Right cardiac atrium (tissue), 5 donors: ENCODE measurements at regions of chr19 and their contacts with region 1.

Region 1: DNA sequence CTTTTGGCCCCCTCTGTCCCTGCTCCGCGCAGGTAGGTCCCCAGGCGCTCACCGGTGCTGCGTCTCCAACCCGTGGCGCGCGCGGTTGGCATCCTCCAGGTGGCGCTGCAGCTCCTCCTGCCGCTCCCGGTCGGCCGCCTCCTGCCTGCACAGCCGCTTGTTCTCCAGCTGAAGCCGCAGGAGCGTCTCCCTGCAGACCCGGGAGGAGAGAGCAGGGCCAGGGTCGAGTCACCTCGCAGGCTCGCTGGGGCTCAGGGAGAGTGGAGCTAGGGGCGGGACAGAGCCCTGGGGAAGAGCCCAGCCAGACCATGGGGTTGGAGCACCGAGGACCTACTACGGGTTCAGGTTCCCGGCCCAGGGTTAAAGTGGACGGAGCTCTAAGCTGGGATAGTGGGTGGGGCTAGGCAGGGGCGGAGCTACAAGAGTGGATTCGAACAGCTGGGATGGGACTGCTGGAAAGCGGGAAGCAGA is 9.3 kb downstream of the HOOK2 start:
- DNase-seq: peak; percentile 79 to 96 (median 95)
- ATAC-seq: peak; percentile 86 to 91
- H3K4me3 ChIP-seq: no peak overlapping the region
- H3K27ac ChIP-seq: no peak overlapping the region
- H3K4me1 ChIP-seq: no peaks in the 10 kb centered on the region
- H3K27me3 ChIP-seq: no peaks in the 10 kb centered on the region

Region 2: GRCh38 chr19:12610540-12611360 is 155.3 kb before region 1 on chr19 and contains the starts of genes ZNF490 and ZNF791:
- intact Hi-C with region 1: no loop called
- DNase-seq: peak; percentile 98 to 99 (median 99)
- ATAC-seq: peak; percentile 99 to 100
- H3K4me3 ChIP-seq: peak within 1 kb of the TSS; percentile 65
- H3K27ac ChIP-seq: peak within 1 kb of the TSS; percentile 95
- H3K4me1 ChIP-seq: no peaks in the 10 kb centered on the region
- H3K27me3 ChIP-seq: no peaks in the 10 kb centered on the region
- total RNA-seq, gene ZNF490: 4.9 to 7.1 (median 6.0) TPM
- total RNA-seq, gene ZNF791: 19.8 to 26.7 (median 20.9) TPM

Region 3: DNA sequence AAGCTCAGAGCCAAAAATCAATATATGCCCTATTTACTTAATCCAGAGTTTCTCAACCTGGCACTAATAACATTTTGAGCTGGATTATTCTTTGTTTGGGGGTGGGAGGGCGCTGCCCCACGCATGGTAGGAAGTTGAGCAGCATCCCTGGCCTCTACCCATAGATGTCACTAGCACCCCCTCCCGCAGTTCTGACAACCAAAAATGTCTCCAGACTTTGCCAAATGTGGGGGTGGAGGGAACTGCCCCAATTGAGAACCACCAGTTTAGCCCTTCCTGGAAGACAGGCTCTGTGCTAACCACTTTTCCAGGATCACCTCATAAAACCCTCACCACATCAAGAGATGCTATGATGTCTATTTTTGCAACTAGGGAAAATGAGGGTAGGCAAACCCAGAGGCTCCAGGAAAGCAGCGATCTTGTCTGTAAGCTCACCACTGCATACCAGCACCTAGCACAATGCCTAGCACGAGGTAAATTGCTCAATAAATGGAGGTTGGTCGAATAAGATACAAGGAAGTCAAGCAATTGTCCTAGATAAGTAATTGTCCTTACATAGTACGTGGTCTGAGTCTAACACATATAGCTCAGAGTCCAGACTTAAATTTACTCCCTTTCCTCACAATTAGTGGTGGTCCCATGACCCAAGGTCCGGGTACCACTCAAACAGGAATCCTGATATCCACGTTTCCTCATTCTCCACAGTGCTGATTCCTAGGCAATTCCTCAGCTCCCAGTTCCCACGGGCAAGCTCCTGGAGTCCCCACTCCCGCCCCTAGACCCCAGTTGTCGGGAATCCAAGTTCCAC is 32.5 kb before region 1 on chr19:
- intact Hi-C with region 1: no loop called
- DNase-seq: no peak
- ATAC-seq: no peak
- H3K4me3 ChIP-seq: peak overlapping the region; percentile 96
- H3K27ac ChIP-seq: peak overlapping the region; percentile 90
- H3K4me1 ChIP-seq: peaks cover 9% of the 10 kb centered on the region
- H3K27me3 ChIP-seq: no peaks in the 10 kb centered on the region

Region 4: GRCh38 chr19:12801466-12802266 is 35.6 kb after region 1 on chr19 and contains the starts of genes PRDX2 and THSD8:
- intact Hi-C with region 1: loop called in 3 of 4 experiments (anchors 5 kb)
- DNase-seq: peak; percentile 81 to 93 (median 93)
- ATAC-seq: peak; percentile 85 to 89
- H3K4me3 ChIP-seq: peak within 1 kb of the TSS; percentile 69
- H3K27ac ChIP-seq: peak within 1 kb of the TSS; percentile 67
- H3K4me1 ChIP-seq: peaks cover 5% of the 10 kb centered on the region
- H3K27me3 ChIP-seq: no peaks in the 10 kb centered on the region
- total RNA-seq, gene PRDX2: 595 to 772 (median 666) TPM
- total RNA-seq, gene THSD8: 2.2 to 3.6 (median 3.0) TPM